ENCODE measurements at regions of chr10 and their contacts with region 1.

Region 1: GRCh38 chr10:9743639-9744038 is 1274.0 kb upstream of the CELF2 start:
- DNase-seq: no peak
- H3K4me3 ChIP-seq: no peak overlapping the region
- H3K4me3 Mint-ChIP-seq: no peak overlapping the region
- H3K27ac Mint-ChIP-seq: no peak overlapping the region
- H3K4me1 ChIP-seq: no peaks in the 10 kb centered on the region
- H3K4me1 Mint-ChIP-seq: no peaks in the 10 kb centered on the region
- H3K27me3 ChIP-seq: no peaks in the 10 kb centered on the region
- H3K27me3 Mint-ChIP-seq: peaks cover 3% of the 10 kb centered on the region
- CTCF ChIP-seq: no peak

Region 2: DNA sequence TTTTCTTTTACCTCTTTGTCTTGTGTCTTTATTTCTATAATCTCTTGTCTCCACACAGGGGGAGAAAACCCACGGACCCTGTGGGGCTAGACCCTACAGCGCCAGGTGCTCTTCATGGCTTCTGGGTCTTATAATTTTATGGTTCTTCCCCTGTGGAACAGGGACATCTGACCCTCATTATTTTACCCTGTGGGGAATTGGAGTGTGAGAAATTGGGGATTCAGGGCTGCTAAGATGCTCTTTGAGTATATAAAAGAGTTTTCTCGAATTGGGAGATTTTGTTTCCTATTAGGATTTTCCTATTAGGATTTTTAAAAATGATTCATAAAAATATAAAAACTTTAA is 340.8 kb before region 1 on chr10:
- CTCF ChIA-PET with region 1: no interaction called
- POLR2A ChIA-PET with region 1: no interaction called
- intact Hi-C with region 1: loop called (anchors 1 kb)
- DNase-seq: no peak
- H3K4me3 ChIP-seq: no peak overlapping the region
- H3K4me3 Mint-ChIP-seq: peak overlapping the region; percentile 51
- H3K27ac Mint-ChIP-seq: no peak overlapping the region
- H3K4me1 ChIP-seq: no peaks in the 10 kb centered on the region
- H3K4me1 Mint-ChIP-seq: peaks cover 7% of the 10 kb centered on the region
- H3K27me3 ChIP-seq: no peaks in the 10 kb centered on the region
- H3K27me3 Mint-ChIP-seq: peaks cover 3% of the 10 kb centered on the region
- CTCF ChIP-seq: no peak

Region 3: DNA sequence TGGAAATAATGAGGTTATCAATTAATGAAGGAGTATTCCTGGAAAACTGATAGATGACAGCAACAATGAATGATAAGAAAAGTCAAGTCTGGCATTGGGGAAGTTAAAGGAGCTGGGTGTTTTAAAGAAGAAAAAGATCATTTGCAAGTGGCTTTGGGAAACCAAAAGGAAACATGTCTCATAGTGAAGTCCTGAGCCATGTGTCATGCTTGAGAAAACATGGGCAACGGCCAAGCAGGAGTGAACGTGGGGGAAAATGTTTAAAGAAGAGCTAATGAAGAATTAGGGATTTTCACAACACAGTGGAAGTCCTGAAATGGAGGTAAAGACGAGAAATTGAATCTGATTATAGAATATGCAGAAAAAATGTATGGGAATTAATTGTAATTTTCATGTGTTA is 109.2 kb before region 1 on chr10:
- CTCF ChIA-PET with region 1: no interaction called
- POLR2A ChIA-PET with region 1: no interaction called
- intact Hi-C with region 1: no loop called
- DNase-seq: no peak
- H3K4me3 ChIP-seq: no peak overlapping the region
- H3K4me3 Mint-ChIP-seq: no peak overlapping the region
- H3K27ac Mint-ChIP-seq: no peak overlapping the region
- H3K4me1 ChIP-seq: no peaks in the 10 kb centered on the region
- H3K4me1 Mint-ChIP-seq: no peaks in the 10 kb centered on the region
- H3K27me3 ChIP-seq: no peaks in the 10 kb centered on the region
- H3K27me3 Mint-ChIP-seq: no peaks in the 10 kb centered on the region
- CTCF ChIP-seq: no peak